ENCODE measurements at regions of chr10 and their contacts with region 1.

Region 1: GRCh38 chr10:67815571-67816059 is 22.4 kb downstream of the DNAJC12 start:
- DNase-seq: no peak
- H3K4me3 Mint-ChIP-seq: no peak overlapping the region
- H3K27ac Mint-ChIP-seq: peak overlapping the region; percentile 84
- H3K4me1 Mint-ChIP-seq: peaks cover 16% of the 10 kb centered on the region
- H3K27me3 Mint-ChIP-seq: peaks cover 6% of the 10 kb centered on the region

Region 2: DNA sequence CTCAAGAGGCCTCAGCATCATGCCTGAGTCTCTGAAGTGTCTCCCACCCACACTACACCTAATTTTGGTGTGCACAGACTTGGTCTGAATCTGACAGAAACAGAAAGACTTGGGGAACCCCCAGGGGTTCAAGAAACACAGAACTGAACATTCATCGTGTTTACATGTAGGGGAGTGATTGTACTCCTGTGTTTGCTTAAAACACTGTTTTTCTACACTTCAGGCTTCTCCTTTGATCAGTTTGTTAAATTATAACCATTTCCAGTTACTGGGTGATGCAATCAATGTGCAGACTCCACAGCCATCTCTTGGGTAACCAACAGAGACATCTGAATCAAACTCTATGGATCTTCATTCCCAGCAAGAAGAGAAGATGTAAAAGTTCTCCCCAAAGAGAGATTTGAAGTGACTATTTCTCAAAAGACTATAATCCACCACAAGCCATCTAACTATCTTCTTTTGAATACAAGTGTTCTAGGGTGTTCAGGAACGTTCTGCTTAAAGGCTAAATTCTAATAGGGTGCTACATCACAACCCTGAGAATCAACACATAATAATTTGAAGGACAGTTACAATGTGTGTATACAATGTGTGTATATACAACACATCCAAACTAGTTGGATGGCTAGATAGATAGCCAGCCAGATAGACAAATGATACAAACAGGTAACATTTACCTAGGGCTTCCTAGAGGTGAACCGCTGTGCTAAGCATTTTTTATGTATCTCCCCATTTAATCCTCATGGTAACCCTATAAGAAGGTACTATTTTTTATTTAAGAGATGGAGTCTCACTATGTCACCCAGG is 11.8 kb before region 1 on chr10:
- CTCF ChIA-PET with region 1: interaction called, 4 read pairs
- intact Hi-C with region 1: loop called (anchors 1 kb)
- DNase-seq: peak; percentile 51
- H3K4me3 Mint-ChIP-seq: no peak overlapping the region
- H3K27ac Mint-ChIP-seq: peak overlapping the region; percentile 87
- H3K4me1 Mint-ChIP-seq: peaks cover 10% of the 10 kb centered on the region
- H3K27me3 Mint-ChIP-seq: no peaks in the 10 kb centered on the region